Calu3 (cell line): ENCODE measurements at regions of chrX and their contacts with region 1.

Region 1: GRCh38 chrX:39730662-39731397 is 366.9 kb downstream of the BCOR start:
- DNase-seq: peak; percentile 68
- H3K4me3 Mint-ChIP-seq: no peak overlapping the region
- H3K27ac Mint-ChIP-seq: no peak overlapping the region
- H3K4me1 Mint-ChIP-seq: peaks cover 24% of the 10 kb centered on the region
- H3K27me3 Mint-ChIP-seq: no peaks in the 10 kb centered on the region
- CTCF ChIP-seq: peak; percentile 31

Region 2: DNA sequence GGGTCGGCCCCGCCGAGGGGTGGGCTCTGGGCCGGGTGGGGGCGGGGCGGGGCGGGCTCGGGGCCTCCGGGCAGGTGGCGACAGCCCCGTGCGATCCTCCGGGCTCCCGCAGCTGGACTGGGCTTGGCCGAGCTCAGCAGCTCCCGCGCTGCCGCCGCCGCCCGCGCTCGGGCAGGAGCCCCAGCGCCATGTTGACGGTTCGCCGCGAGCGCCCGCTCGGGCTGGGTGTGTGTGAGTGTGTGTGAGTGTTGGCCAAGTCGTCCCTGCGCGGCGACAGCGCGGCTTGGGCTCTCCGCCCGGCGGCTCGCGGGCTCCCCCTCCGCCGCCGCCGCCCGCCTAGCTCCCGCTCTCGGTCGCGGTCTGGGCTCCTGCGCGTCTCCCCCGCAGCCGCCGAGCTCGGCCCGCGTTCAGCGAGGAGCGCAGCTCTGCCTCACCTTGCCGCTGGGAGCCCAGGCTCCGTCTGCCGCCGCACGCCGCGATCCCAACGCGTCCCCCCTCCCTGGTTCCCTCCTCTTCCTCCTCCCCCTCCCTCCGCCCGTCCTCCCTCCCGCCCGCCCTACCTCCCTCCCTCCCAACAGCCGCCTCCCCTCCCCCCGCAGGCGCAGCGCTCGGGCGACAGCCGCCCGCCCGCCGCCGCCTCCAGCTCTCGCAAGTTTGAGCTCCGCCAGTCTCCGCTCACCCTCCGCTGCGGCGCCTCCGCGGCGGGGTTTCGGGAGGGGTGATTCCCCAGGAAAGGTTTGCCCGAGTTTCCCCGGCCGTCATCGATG is 366.9 kb after region 1 on chrX and contains the start of gene BCOR:
- CTCF ChIA-PET with region 1: no interaction called
- intact Hi-C with region 1: loop called (anchors 5 kb)
- DNase-seq: peak; percentile 71
- H3K4me3 Mint-ChIP-seq: peak within 1 kb of the TSS; percentile 83
- H3K27ac Mint-ChIP-seq: peak within 1 kb of the TSS; percentile 42
- H3K4me1 Mint-ChIP-seq: peaks cover 25% of the 10 kb centered on the region
- H3K27me3 Mint-ChIP-seq: peaks cover 18% of the 10 kb centered on the region
- CTCF ChIP-seq: no peak
- total RNA-seq, gene BCOR: 20.6 and 21.1 TPM in 2 replicates

Region 3: DNA sequence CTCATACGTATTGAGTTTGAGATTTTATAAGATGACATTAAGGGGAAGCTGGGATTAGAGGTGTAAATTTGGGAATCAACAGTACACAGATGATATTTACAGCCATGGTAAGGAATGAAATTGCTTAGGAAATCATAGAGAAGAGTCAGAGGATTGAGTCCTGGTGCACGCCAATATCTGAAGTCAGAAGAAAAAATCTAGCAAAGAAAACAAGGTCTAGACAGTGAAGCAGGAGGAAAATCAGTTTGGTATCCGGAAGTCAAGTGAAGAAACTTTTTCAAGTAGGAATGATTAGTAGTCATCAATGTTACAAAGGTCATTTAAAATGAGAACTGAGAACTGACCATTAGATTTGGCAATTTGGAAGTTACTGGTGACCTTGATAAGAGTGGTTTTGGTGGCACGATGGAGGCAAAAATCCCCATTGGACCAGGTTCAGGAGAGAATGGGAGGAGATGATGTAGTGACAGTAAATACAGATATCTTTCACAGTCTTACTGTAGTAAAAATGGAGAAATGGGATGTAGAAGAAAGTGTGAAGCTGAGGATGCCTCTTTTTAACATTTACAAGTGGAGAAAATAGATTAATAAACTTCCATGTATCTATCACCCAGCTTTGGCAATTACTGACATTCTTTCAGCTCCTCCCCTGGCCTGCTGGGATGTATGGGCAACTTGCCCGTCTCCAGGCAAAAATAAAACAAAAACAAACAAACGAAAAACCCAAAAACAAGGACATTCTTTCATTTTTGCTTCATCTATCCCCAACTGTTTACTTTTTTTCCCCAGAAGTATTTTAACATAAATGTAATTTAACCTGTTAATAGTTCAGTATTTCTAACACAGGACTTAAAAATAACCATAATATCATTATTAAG is 1946.6 kb after region 1 on chrX:
- CTCF ChIA-PET with region 1: no interaction called
- intact Hi-C with region 1: no loop called
- DNase-seq: no peak
- H3K4me3 Mint-ChIP-seq: no peak overlapping the region
- H3K27ac Mint-ChIP-seq: no peak overlapping the region
- H3K4me1 Mint-ChIP-seq: no peaks in the 10 kb centered on the region
- H3K27me3 Mint-ChIP-seq: no peaks in the 10 kb centered on the region
- CTCF ChIP-seq: no peak